ENCODE measurements at regions of chr19 and their contacts with region 1.

Region 1: GRCh38 chr19:2145831-2146241 is 5.5 kb downstream of the AP3D1 start:
- DNase-seq: no peak
- ATAC-seq: no peak
- H3K4me3 Mint-ChIP-seq: no peak overlapping the region
- H3K27ac Mint-ChIP-seq: no peak overlapping the region
- H3K4me1 Mint-ChIP-seq: peaks cover 50% of the 10 kb centered on the region
- H3K27me3 Mint-ChIP-seq: no peaks in the 10 kb centered on the region
- CTCF ChIP-seq: no peak

Region 2: GRCh38 chr19:2032296-2032941 is 113.4 kb before region 1 on chr19:
- CTCF ChIA-PET with region 1: no interaction called
- POLR2A ChIA-PET with region 1: interaction called, 11 read pairs
- intact Hi-C with region 1: no loop called
- DNase-seq: no peak
- ATAC-seq: peak; percentile 26
- H3K4me3 Mint-ChIP-seq: peak overlapping the region; percentile 46
- H3K27ac Mint-ChIP-seq: peak overlapping the region; percentile 64
- H3K4me1 Mint-ChIP-seq: peaks cover 28% of the 10 kb centered on the region
- H3K27me3 Mint-ChIP-seq: no peaks in the 10 kb centered on the region
- CTCF ChIP-seq: no peak

Region 3: GRCh38 chr19:2113439-2114211 is 32.2 kb before region 1 on chr19:
- CTCF ChIA-PET with region 1: no interaction called
- POLR2A ChIA-PET with region 1: no interaction called
- intact Hi-C with region 1: no loop called
- DNase-seq: no peak
- ATAC-seq: peak; percentile 35
- H3K4me3 Mint-ChIP-seq: no peak overlapping the region
- H3K27ac Mint-ChIP-seq: no peak overlapping the region
- H3K4me1 Mint-ChIP-seq: peaks cover 3% of the 10 kb centered on the region
- H3K27me3 Mint-ChIP-seq: no peaks in the 10 kb centered on the region
- CTCF ChIP-seq: no peak

Region 4: GRCh38 chr19:2161688-2162053 is 15.8 kb after region 1 on chr19:
- CTCF ChIA-PET with region 1: no interaction called
- POLR2A ChIA-PET with region 1: interaction called, 12 read pairs
- intact Hi-C with region 1: loop called (anchors 1 kb)
- DNase-seq: no peak
- ATAC-seq: no peak
- H3K4me3 Mint-ChIP-seq: no peak overlapping the region
- H3K27ac Mint-ChIP-seq: peak overlapping the region; percentile 18
- H3K4me1 Mint-ChIP-seq: peaks cover 22% of the 10 kb centered on the region
- H3K27me3 Mint-ChIP-seq: no peaks in the 10 kb centered on the region
- CTCF ChIP-seq: no peak

Region 5: GRCh38 chr19:2345794-2346663 is 200.2 kb after region 1 on chr19:
- CTCF ChIA-PET with region 1: no interaction called
- POLR2A ChIA-PET with region 1: no interaction called
- intact Hi-C with region 1: no loop called
- DNase-seq: no peak
- ATAC-seq: no peak
- H3K4me3 Mint-ChIP-seq: no peak overlapping the region
- H3K27ac Mint-ChIP-seq: no peak overlapping the region
- H3K4me1 Mint-ChIP-seq: no peaks in the 10 kb centered on the region
- H3K27me3 Mint-ChIP-seq: no peaks in the 10 kb centered on the region
- CTCF ChIP-seq: no peak